A549 (cell line): ENCODE measurements at regions of chr14 and their contacts with region 1.

Region 1: GRCh38 chr14:73231981-73232851 is 5.1 kb upstream of the PAPLN start:
- DNase-seq: peak; percentile 73
- ATAC-seq: peak; percentile 52 to 70
- H3K4me3 ChIP-seq: no peak overlapping the region
- H3K27ac ChIP-seq: peak overlapping the region in 1 of 2 experiments; percentile 76; a peak in 4 of 6 replicates
- H3K4me1 ChIP-seq: peaks cover 61% of the 10 kb centered on the region
- CTCF ChIP-seq: peak; percentile 46
- EP300 ChIP-seq: no peak
- POLR2A ChIP-seq: no peak
- RAD21 ChIP-seq: peak; percentile 59 to 67

Region 2: DNA sequence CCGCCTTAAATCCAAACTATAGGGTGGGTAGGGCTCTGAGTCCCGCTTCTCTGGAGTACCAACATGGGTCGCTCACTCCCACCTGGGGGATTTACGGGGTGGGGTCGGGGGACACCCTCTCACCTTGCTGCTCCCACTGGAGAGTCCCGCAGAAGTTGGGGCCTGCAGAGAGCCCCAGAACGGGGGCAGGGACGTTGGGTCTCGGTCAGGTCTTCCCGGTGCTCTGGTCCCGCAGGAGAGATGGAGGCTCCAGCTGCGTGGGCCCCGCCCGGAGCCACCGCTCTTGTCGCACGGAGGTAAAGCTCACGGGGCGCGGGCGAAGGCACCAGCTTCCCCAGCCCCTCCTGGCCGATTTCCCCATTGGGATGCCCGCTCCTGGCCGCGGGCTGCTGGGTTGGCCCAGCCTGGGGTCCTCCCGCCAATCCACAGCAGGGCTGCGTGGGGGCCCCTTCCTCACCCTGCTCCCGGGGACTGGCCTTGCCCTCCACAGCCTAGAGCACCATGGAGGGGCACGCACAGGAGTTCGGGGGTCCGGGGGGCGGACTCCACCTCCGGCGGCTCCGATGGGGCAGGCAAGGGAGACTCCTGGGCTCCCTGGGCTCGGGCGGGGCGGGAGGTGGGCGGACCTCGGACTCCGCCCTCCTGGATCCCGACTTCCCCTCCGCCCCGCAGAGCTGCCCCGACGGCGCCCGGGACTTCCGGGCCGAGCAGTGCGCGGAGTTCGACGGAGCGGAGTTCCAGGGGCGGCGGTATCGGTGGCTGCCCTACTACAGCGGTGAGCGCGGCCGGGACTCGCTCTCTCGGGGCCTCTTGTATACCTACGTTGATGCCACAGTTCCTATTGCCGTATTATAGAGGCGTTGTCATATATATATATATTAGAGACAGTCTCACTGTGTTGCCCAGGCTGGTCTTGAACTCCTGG is 13.4 kb after region 1 on chr14:
- CTCF ChIA-PET with region 1: interaction called, 26 read pairs
- POLR2A ChIA-PET with region 1: no interaction called
- DNase-seq: no peak
- ATAC-seq: no peak
- H3K4me3 ChIP-seq: no peak overlapping the region
- H3K27ac ChIP-seq: no peak overlapping the region
- H3K4me1 ChIP-seq: no peaks in the 10 kb centered on the region
- CTCF ChIP-seq: no peak
- EP300 ChIP-seq: no peak
- POLR2A ChIP-seq: no peak
- RAD21 ChIP-seq: no peak